ENCODE measurements at regions of chr6 and their contacts with region 1.

Region 1: GRCh38 chr6:46090115-46091079 is 39.4 kb upstream of the ENPP4 start:
- DNase-seq: peak; percentile 1
- H3K4me3 ChIP-seq: no peak overlapping the region
- H3K27ac ChIP-seq: no peak overlapping the region
- H3K27me3 ChIP-seq: no peaks in the 10 kb centered on the region
- CTCF ChIP-seq: peak; percentile 77

Region 2: DNA sequence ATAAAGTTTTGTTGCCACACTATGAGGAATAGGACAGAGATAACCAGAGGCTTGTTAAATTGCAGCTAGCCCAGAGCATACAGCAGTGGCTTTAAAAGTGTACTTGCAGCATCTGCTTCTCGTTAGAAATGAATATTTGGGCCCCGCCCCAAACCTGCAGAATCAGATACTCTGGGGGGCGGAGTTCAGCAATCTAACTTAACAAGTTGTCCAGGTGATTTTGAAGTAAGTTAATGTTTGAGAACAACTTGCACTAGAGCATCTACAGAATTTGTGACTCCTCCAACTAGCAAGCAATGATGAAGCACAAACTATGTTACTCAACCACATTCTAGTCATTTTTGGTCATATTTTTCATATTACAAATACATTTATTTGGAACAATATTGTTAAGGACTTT is 702.1 kb before region 1 on chr6:
- CTCF ChIA-PET with region 1: no interaction called
- POLR2A ChIA-PET with region 1: no interaction called
- DNase-seq: no peak
- H3K4me3 ChIP-seq: no peak overlapping the region
- H3K27ac ChIP-seq: no peak overlapping the region
- H3K27me3 ChIP-seq: no peaks in the 10 kb centered on the region
- CTCF ChIP-seq: no peak

Region 3: GRCh38 chr6:45864651-45865050 is 225.7 kb before region 1 on chr6:
- CTCF ChIA-PET with region 1: no interaction called
- POLR2A ChIA-PET with region 1: no interaction called
- DNase-seq: no peak
- H3K4me3 ChIP-seq: no peak overlapping the region
- H3K27ac ChIP-seq: no peak overlapping the region
- H3K27me3 ChIP-seq: peaks cover 2% of the 10 kb centered on the region
- CTCF ChIP-seq: no peak

Region 4: GRCh38 chr6:46080111-46080510 is 10.3 kb before region 1 on chr6:
- CTCF ChIA-PET with region 1: interaction called, 14 read pairs
- POLR2A ChIA-PET with region 1: no interaction called
- DNase-seq: no peak
- H3K4me3 ChIP-seq: no peak overlapping the region
- H3K27ac ChIP-seq: no peak overlapping the region
- H3K27me3 ChIP-seq: no peaks in the 10 kb centered on the region
- CTCF ChIP-seq: no peak

Region 5: DNA sequence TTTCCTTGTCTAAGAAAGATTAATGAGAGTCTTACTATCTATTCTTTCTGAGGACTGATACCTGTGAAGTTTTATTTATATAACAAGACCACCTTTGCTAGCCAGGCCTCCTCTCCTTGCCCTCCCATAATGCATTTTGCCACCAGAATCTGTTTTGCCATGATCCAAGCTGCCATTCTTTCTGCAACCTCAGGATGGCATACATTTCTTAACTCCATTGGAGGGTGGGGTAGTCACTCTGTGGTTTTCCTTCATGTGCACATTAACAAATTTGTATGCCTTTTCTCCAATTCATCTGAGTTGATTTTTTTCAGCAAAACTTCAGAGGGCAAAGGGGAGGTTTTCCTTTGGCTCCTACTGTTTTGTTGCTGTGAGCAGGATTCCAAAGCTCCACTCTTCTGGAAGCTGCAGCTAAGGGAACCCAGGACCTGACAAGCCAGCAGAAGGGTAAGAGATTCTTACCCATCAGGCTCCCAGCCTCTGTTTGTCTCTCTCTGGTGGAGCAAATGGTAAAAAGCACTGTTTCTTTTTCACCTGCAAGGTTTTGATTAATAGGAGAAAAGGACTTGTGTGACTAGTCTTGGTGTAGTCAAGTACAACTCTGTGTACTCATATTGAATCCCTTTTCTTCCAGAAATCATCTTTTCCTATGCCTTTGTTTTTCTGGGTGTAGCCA is 13.2 kb after region 1 on chr6:
- CTCF ChIA-PET with region 1: interaction called, 10 read pairs
- POLR2A ChIA-PET with region 1: no interaction called
- DNase-seq: no peak
- H3K4me3 ChIP-seq: no peak overlapping the region
- H3K27ac ChIP-seq: no peak overlapping the region
- H3K27me3 ChIP-seq: no peaks in the 10 kb centered on the region
- CTCF ChIP-seq: no peak

Region 6: DNA sequence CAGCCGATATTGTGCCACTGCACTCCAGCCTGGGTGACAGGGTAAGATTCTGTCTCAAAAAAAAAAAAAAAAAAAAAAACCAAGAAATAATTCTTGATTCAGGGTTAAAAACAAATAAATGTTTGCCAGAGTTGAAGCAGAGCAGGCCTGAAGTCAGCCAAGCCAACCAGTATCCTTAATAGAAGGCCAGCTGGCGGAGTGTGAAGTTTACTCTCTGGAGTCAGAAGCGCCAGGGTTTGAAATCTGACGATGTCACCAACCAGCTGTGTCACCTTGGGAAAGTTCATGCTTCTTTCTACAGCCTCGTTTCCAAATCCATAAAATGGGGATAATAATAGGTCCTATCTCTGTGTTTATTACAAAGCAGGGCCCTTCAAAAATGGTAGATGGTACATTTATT is 153.4 kb after region 1 on chr6:
- CTCF ChIA-PET with region 1: no interaction called
- POLR2A ChIA-PET with region 1: no interaction called
- DNase-seq: no peak
- H3K4me3 ChIP-seq: no peak overlapping the region
- H3K27ac ChIP-seq: no peak overlapping the region
- H3K27me3 ChIP-seq: no peaks in the 10 kb centered on the region
- CTCF ChIP-seq: no peak

Region 7: DNA sequence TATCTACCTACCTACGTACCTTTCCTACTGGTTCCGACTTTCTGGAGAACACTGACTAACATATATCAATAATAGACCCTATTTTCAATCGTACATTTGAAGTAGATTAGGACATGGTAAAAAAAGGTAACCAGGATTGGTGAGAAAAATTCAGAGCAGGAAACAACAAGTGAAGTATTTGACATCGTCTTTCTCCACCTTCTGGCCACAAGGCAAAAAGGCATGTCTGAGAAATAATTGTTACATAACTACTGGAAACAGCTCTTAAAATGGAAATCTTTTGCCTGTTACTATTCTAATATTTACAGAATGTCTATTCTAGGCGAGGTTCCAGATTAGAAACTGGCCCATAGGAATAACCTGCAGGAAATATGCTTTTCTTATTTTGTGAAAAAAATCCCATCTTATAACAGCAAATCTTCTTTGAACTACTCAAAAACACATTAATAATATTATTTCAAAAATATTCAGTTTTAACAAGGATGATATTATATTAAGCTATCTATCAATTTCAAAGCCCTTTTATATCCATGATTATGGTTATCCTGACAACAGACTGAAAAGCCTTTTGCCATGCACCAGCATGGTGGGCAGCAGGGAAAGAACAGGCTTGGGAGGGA is 320.0 kb after region 1 on chr6:
- CTCF ChIA-PET with region 1: interaction called, 20 read pairs
- POLR2A ChIA-PET with region 1: no interaction called
- DNase-seq: no peak
- H3K4me3 ChIP-seq: no peak overlapping the region
- H3K27ac ChIP-seq: no peak overlapping the region
- H3K27me3 ChIP-seq: no peaks in the 10 kb centered on the region
- CTCF ChIP-seq: peak; percentile 39